PC-9 (cell line): ENCODE measurements at regions of chr22 and their contacts with region 1.

Region 1: DNA sequence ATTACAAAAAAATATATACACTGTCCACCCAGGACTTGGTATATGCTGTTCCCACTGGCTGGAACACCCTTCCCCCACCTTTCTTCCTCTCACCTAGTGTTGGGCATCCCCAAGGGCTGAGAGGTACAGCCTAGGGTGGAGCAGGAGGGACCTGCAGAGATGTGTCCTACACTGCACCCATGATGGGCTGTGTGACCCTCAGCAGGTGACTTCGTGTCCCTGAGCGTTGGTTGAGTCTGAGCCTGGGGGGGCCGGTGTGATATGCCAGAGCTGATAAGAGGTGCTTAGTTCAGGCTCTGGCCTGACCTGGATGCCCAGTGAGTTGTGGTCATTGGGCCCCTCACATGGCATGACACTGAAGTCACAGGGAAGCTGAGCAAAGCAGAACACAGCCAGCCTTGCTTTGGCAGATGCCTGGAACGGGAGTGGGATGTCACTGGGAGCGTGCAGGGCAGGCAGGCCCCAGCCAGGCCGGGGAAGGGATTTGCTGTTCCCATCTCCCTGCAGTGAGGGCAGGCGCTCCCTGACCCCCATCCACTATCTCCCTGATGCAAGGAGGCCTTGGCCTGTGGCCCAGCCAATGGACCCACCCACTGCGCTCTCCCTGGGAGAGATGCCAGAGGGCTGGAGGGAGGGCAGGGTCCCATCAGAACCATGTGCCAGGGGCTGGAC is 139.1 kb downstream of the MN1 start:
- DNase-seq: peak in 1 of 2 experiments; percentile 72
- H3K4me3 ChIP-seq: no peak overlapping the region
- H3K27ac ChIP-seq: peak overlapping the region; percentile 89
- H3K4me1 ChIP-seq: peaks cover 38% of the 10 kb centered on the region
- H3K27me3 ChIP-seq: no peaks in the 10 kb centered on the region
- CTCF ChIP-seq: no peak

Region 2: DNA sequence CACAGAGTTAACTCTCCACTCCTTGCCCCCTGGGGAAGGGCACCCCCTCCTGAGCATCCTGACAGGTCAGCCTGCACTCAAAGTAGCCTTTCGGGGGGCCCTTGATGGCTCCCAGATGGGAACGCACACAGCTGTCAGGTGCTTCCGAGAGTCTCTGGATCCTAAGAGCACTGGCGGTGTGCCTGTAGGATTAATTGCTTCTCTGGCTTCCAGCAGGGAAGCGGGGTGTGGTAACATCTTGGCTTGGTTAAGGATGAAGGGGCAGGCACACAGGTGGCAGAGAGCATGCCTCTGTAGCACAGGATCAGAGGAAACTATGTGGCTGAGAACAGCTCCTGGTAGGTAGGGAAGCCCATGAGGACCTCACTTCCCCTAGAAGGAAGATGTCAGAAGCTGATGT is 805.3 kb before region 1 on chr22:
- CTCF ChIA-PET with region 1: no interaction called
- POLR2A ChIA-PET with region 1: no interaction called
- intact Hi-C with region 1: no loop called
- DNase-seq: no peak
- H3K4me3 ChIP-seq: no peak overlapping the region
- H3K27ac ChIP-seq: no peak overlapping the region
- H3K4me1 ChIP-seq: no peaks in the 10 kb centered on the region
- H3K27me3 ChIP-seq: peaks cover 85% of the 10 kb centered on the region
- CTCF ChIP-seq: no peak

Region 3: DNA sequence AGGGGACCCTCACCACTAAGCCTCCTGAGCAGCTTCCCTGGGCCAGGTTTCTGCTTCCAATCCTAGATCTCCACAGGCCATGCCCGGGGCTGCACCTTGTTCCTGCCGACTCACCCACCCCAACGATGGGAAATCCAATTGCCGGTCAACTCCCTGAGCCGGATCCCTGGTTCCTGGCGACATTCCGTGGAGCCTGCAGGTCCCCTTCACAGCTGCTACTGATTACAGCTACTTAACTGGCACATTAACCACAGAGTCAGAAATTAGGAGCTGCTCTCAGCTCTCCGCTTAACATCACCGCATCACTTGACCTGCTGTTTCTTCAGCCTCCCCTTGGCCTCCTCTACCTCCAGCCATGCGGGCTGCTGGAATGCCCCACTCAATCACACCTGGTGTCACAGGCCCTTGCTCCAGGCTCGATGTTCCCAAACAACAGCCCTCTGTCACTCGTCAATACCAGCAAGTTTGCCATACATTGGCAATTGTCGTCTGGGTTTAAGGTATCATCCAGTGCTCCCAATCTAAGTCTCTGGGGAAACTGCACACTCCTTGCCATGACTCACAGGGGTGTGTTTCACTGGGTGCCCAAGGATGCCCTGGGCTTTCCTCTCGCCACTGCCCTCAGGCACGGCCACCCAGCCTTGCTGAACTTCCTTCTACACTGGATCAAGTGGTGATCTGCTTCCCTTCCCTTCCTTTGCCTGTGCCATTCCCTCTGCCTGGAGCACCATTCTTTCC is 42.0 kb before region 1 on chr22:
- CTCF ChIA-PET with region 1: no interaction called
- POLR2A ChIA-PET with region 1: no interaction called
- intact Hi-C with region 1: loop called (anchors 2 kb)
- DNase-seq: peak; percentile 67 to 90
- H3K4me3 ChIP-seq: no peak overlapping the region
- H3K27ac ChIP-seq: peak overlapping the region; percentile 78
- H3K4me1 ChIP-seq: peaks cover 24% of the 10 kb centered on the region
- H3K27me3 ChIP-seq: no peaks in the 10 kb centered on the region
- CTCF ChIP-seq: no peak

Region 4: GRCh38 chr22:27692243-27692642 is 29.7 kb after region 1 on chr22:
- CTCF ChIA-PET with region 1: no interaction called
- POLR2A ChIA-PET with region 1: no interaction called
- intact Hi-C with region 1: no loop called
- DNase-seq: no peak
- H3K4me3 ChIP-seq: no peak overlapping the region
- H3K27ac ChIP-seq: no peak overlapping the region
- H3K4me1 ChIP-seq: 0 out of 2 replicates have a peak, but pooled peaks cover 5% of the 10 kb centered on the region
- H3K27me3 ChIP-seq: no peaks in the 10 kb centered on the region
- CTCF ChIP-seq: no peak